Left cardiac atrium (tissue), 4 donors: ENCODE measurements at regions of chr10 and their contacts with region 1.

Region 1: DNA sequence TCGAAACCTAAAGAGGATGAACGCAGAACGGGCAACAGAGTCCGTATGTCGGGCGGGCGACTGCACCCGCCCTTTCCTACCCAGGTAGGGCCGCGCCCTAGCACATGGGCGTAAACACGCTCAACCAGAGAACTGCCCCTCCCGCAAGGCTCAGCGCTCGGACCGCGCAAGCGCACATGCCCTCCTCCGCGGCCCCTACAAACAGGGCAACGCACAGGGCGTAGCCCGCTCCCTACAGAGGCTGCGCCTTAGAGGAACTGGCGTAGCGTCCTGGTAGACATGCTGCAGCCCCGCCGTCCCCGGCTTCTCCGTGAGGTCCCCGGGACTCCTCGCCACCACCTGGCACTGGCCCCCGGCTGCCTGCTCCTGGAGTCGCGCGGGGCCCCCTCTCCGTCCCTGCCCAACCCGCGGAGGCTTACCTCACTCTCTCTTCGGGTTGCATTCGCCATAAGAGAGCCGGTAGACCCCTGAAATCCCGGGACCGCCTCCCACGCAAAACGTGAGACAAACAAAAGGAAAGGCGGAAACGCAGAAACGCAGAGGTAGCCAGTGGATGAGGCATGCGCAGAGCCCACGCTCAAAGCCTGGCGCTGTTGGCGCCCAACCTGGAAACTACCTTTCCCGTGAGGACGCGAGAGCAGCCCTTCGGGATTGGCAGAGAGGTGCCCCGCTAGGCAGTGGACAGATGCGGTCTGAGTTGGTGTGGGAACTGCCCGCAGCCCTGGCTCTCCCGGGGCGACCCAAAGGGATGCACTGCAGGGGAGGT is at the start of gene ZNF33B:
- DNase-seq: peak; percentile 95
- ATAC-seq: peak; percentile 99 to 100
- total RNA-seq, gene ZNF33B: 10.2 to 10.4 TPM

Region 2: GRCh38 chr10:42552493-42553407 is 85.5 kb before region 1 on chr10:
- intact Hi-C with region 1: loop called in 1 of 2 experiments (anchors 10 kb)
- DNase-seq: peak; percentile 98
- ATAC-seq: peak; percentile 99

Region 3: DNA sequence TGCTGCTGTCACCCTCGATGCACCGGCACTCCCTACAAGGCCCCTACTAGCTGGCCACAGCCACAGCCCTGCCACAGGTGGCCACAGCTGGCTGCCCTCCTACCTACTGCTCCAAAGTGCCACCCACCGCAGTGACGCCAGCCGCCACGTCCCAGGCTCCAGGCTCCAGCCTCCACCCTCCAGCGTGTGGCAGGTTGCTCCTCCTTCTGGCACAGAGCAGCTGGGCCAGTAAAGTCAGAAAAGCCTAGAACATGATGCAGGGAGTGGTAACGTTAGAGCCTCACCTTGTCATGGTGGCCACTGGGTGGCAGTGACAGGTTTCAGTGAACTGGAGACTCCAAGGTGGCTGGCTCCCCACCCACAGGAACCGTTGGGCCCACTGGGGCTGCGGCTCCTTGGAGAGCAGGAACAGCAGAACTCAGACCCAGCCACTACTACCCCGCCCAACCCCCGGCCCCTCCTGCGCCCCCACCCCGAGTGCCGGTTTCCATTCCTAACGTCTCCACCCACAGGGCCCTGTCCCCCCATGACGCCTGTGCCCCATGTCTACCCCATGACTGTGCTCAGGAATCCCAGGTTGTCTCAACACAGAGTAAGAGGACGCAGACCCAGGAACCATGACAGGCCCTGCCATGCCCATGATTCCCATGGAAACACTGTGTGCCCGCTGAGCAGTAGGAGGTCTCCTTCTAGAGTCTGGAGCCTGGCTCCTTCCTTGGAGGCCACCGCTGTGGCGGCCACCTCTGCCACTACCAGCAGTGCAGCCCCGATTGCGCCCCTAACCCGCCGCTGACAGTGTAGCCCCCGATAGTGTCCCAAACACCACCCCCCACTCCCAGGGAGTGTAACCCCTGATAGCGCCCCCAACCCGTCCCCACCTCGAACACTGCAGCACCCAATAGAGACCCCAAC is 52.5 kb after region 1 on chr10:
- intact Hi-C with region 1: no loop called
- DNase-seq: no peak
- ATAC-seq: no peak